ENCODE measurements at regions of chr20 and their contacts with region 1.

Region 1: DNA sequence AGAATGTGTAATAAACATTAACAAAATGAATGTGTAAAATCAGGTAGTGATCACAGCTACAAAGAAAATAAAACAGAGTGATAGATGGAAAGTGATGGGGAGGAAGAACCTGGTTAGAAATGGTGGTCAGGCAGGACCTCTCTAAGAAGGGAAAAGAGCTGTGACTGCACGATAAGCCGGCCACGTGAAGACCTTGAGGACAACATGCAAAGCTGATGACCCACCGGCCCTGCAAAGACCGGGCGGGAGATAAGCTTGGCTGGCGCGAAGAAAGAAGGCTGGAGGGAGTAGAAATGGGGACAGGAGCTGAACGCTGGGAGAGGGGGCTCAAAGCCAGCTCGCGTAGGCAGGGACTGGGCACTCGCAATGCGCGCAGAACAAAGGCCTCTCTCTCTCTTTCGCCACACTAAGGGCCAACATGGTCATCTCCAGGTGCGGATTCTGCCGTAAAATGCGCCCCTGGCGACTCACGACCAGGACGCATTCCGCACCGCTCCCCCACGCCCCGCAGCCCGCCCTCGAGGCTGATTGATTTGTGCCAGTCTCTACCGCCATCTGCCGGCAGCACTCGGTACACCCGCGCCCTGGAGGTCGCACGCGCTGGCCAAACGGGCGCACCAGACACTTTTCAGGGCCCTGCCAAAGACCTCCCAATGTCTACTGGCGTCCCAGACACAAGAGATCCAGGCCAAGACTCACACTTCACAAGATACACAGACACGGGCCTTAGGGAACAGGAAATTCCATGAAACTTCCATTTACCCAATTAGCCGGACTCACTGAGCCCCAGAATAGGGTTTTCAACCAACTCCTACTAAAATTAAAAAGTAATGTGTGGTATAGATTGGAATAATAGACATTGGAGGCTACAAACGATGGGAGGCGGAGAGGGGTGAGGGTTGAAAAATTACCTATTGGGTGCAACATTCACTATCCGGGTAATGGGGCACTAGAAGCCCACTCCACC is 9.4 kb downstream of the DEFB132 start:
- DNase-seq: peak; percentile 94
- ATAC-seq: peak; percentile 97
- H3K4me3 Mint-ChIP-seq: peak overlapping the region; percentile 77
- H3K27ac Mint-ChIP-seq: peak overlapping the region; percentile 62
- H3K4me1 Mint-ChIP-seq: peaks cover 10% of the 10 kb centered on the region
- H3K27me3 Mint-ChIP-seq: peaks cover 6% of the 10 kb centered on the region

Region 2: GRCh38 chr20:208942-209566 is 57.8 kb before region 1 on chr20:
- CTCF ChIA-PET with region 1: interaction called, 31 read pairs
- POLR2A ChIA-PET with region 1: interaction called, 3 read pairs
- DNase-seq: peak; percentile 34
- ATAC-seq: peak; percentile 82
- H3K4me3 Mint-ChIP-seq: no peak overlapping the region
- H3K27ac Mint-ChIP-seq: no peak overlapping the region
- H3K4me1 Mint-ChIP-seq: no peaks in the 10 kb centered on the region
- H3K27me3 Mint-ChIP-seq: peaks cover 14% of the 10 kb centered on the region

Region 3: DNA sequence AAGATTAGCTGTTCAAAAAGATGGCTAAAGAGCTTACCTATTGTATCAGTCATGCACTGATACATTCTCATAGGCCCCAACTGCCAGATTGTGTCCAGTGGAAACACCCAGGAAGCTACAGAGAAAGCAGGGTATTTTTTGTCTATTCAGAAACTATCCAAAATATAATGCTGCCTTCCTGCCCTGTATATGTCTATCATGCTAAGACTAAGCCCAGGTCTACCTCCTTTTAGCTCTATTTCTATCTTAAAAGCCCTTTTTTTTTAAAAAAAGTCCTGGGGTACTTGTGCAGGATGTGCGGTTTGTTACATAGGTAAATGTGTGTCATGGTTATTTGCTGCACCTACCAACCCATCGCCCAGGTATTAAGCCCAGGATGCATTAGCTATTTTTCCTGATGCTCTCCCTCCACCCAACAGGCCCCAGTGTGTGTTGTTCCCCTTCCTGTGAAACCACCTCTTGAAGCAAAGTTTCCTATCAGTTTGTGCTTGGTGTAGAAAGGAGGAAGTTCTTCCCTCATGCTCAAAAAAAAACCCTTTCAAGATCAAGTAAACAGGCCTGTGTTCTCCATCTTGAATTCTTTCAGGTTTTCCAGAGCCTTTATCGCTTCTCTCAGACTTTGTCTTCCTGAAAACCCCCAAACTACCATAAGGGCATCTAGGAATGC is 39.3 kb before region 1 on chr20:
- CTCF ChIA-PET with region 1: interaction called, 19 read pairs
- POLR2A ChIA-PET with region 1: interaction called, 3 read pairs
- DNase-seq: no peak
- ATAC-seq: no peak
- H3K4me3 Mint-ChIP-seq: no peak overlapping the region
- H3K27ac Mint-ChIP-seq: no peak overlapping the region
- H3K4me1 Mint-ChIP-seq: peaks cover 27% of the 10 kb centered on the region
- H3K27me3 Mint-ChIP-seq: peaks cover 16% of the 10 kb centered on the region

Region 4: GRCh38 chr20:242905-243304 is 24.0 kb before region 1 on chr20:
- CTCF ChIA-PET with region 1: interaction called, 46 read pairs
- POLR2A ChIA-PET with region 1: interaction called, 3 read pairs
- DNase-seq: no peak
- ATAC-seq: no peak
- H3K4me3 Mint-ChIP-seq: no peak overlapping the region
- H3K27ac Mint-ChIP-seq: no peak overlapping the region
- H3K4me1 Mint-ChIP-seq: peaks cover 7% of the 10 kb centered on the region
- H3K27me3 Mint-ChIP-seq: peaks cover 15% of the 10 kb centered on the region

Region 5: DNA sequence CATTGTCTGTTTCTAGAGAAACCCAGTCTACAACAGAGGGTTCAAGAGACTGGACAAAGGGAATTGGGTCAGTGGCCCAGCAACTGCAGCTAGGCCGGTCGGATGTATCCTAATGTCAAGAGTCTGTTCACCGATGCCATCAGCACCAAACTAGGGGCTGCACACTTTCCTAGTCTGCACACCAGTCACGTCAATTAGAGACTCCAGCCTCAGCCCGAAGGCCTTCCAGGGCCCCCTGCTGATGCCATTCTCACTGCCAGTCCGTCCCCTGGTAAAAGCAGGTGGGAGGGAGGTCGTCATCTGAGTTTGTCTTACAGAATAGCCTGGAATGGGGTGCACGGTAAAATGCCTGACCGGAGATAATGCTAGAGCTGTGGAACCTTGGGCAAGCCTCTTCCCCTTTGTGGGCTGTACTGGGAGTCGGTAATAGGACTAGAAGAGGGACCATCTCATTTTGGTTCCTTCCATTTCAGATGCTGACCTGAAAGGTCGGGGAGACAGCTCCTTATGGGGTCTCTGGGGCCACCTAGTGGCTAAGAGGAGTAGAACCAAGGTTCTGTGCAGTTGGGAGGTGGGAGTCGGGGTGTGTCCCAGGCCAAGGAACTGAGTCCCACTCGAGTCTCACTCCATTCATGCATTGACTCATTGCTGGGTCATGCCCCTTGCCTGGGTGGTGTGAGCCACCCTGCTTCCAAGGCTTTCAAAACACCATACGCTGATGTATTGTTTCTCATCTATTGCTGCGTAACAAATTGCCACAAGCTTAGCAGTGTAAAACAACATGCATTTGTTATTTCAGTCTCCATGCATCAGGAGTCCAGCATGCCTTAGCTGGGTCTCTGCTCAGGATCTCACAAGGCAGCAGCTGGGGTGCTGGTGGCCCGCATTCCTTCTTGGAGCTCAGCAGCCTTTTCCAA is 63.6 kb after region 1 on chr20:
- CTCF ChIA-PET with region 1: interaction called, 51 read pairs
- POLR2A ChIA-PET with region 1: no interaction called
- DNase-seq: peak; percentile 75
- ATAC-seq: peak; percentile 59
- H3K4me3 Mint-ChIP-seq: no peak overlapping the region
- H3K27ac Mint-ChIP-seq: no peak overlapping the region
- H3K4me1 Mint-ChIP-seq: peaks cover 37% of the 10 kb centered on the region
- H3K27me3 Mint-ChIP-seq: no peaks in the 10 kb centered on the region

Region 6: DNA sequence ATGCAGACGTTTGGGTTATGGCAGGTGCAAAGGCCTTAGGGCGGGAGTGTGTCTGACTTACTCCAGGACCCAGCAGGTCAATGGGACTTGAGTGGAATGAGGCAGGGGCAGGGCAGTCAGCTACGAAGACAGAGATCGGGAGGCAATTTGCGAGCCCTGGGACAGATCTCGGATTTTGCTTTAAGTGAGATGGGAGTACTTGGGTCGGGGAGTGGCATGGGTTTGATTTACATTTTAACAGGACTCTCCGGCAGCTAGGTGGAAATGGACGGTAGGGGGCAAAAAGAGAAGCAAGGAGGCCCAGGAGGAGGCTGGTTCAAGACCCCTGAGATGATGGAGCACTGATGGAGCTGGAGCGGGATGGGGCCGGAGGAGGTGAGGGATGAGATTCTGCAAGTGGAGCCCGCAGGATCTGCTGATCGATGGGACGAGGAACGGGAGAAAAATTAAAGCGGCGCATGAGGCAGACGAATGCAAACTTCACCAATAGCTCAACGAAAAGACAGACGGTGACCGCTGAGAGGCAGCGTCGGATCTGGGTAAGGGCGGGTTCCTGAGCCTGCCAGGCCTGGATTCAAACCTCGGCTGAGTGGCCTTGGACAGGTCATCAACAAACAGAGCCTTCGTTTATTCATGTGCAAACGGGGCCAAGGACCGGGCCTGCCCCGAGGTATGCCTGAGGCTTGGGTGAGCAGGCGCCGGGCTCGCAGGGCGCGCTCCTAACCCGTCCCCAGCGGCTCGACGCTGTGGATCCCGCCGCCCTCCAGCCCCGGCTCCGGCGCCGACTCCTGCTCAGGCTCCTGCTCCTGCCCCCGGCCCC is 140.5 kb after region 1 on chr20:
- CTCF ChIA-PET with region 1: no interaction called
- POLR2A ChIA-PET with region 1: no interaction called
- DNase-seq: peak; percentile 77
- ATAC-seq: peak; percentile 86
- H3K4me3 Mint-ChIP-seq: peak overlapping the region; percentile 85
- H3K27ac Mint-ChIP-seq: peak overlapping the region; percentile 98
- H3K4me1 Mint-ChIP-seq: peaks cover 56% of the 10 kb centered on the region
- H3K27me3 Mint-ChIP-seq: no peaks in the 10 kb centered on the region